Sciatic nerve (tissue), 2 donors: ENCODE measurements at regions of chr12 and their contacts with region 1.

Region 1: DNA sequence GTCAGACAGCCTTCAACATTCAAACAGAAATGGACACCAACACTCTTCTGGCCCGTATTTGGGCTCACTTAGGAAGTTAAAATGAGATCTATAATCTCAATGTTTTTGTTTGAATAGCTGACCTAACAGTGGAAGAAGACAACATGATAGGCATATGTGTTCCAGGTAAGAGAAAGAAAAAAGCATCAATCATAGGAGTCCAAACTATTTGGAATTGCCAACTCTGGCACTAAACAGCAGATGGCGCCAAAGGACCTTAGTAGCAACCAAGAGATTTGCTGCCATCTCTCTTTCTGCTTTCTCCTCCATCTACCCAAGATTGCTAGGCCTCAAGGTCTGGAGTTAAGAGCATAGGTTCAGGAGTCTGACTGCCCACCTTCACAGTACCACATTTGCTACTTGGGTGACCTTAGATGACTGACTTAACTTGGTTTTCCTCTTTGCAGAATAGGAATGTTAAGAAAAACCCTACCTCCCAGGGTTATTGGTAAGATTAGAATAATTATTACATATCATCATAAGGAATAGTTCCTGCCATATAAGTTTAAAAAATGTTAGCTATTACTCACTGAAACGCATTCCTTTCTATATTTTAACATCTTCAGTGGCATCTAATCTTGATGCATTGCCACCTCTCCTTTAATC is 30.2 kb downstream of the PEX5 start:
- DNase-seq: peak; percentile 81
- ATAC-seq: no peak

Region 2: DNA sequence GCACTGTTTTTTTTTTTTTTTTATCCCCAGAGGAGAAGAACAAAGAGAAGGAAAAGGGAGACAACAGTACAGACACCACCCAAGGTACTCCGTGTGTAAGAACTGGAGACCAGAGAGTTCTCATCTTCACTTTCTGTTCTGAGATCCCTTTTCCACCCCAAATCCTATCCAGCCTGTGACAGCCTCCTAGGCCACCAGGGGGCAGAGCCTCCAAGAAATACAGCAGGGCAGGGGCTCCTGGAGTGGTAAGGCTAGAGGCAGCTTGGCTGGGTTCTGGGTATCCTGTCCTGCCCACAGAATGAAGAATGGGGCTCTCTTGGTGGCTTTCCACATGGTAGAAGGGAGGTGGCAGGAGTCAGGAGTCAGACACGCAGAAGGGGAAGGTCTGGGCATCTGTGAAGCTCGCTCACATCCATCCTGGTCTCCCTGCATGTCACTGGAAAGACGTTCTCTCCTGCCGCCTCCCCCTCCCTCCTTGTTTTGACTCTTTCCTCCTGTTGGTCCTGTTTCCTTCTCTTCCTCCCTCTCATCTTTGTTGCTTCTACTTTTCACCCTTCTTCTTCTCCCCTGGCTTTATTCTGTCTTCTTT is 77.6 kb before region 1 on chr12:
- intact Hi-C with region 1: no loop called
- DNase-seq: no peak
- ATAC-seq: peak; percentile 57

Region 3: DNA sequence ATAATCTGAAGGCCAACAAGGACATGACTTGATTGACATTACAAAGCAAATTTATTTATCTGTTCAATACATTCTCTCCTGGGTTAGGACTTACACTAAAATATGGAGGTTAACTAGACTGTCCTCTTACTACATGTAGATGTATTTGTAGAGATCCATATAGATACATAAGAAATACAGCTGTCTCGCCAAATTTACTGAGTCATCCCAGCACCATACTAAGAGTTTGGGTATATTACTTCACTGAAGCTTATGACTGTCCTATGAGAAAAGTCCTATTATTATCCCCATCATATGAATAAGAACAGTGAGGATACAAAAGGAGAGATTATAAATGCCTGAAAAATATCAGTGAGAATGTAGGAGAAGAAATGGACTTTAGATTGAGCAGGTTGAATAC is 39.3 kb after region 1 on chr12:
- intact Hi-C with region 1: no loop called
- DNase-seq: no peak
- ATAC-seq: no peak

Region 4: DNA sequence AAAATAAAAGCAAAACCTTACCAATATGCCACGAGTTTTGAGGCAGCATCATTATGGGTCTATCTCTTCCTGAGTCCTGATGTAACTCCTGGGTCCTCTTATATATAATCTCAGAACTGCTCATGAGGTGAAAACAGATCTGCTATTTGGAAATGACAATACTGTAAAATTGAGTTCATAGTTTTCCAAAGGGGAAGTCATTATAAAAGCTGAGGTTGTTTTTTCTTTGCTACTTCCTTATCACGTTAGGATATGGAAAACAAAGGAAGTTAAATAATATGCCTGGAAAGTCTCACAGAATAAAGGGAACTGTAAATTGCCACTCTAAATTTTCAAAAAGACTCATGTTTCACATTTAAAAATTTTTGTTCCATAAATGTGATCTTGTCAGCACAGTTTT is 224.4 kb after region 1 on chr12 and contains the start of gene CD163L1:
- intact Hi-C with region 1: loop called (anchors 1 kb)
- DNase-seq: no peak
- ATAC-seq: no peak
- total RNA-seq, gene CD163L1: 12.0 TPM

Region 5: GRCh38 chr12:7479771-7480170 is 260.1 kb after region 1 on chr12:
- intact Hi-C with region 1: no loop called
- DNase-seq: no peak
- ATAC-seq: no peak

Region 6: GRCh38 chr12:7642876-7643309 is 423.2 kb after region 1 on chr12:
- intact Hi-C with region 1: loop called (anchors 5 kb)
- DNase-seq: no peak
- ATAC-seq: no peak